ENCODE measurements at regions of chr16 and their contacts with region 1.

Region 1: GRCh38 chr16:68396481-68396880 is 51.8 kb downstream of the SMPD3 start:
- DNase-seq: peak; percentile 26 to 75 (median 53)
- H3K4me3 ChIP-seq: no peak overlapping the region
- H3K4me3 Mint-ChIP-seq: peak overlapping the region in 1 of 7 donors; percentile 36
- H3K27ac ChIP-seq: no peak overlapping the region
- H3K27ac Mint-ChIP-seq: peak overlapping the region in 5 of 8 donors; percentile 14 to 76 (median 38)
- H3K4me1 ChIP-seq: peaks cover 27% of the 10 kb centered on the region
- H3K4me1 Mint-ChIP-seq: peaks cover 12 to 25% (median 17%) of the 10 kb centered on the region in 3 donors
- H3K27me3 ChIP-seq: no peaks in the 10 kb centered on the region
- H3K27me3 Mint-ChIP-seq: peaks cover 0 to 2% of the 10 kb centered on the region in 2 donors

Region 2: DNA sequence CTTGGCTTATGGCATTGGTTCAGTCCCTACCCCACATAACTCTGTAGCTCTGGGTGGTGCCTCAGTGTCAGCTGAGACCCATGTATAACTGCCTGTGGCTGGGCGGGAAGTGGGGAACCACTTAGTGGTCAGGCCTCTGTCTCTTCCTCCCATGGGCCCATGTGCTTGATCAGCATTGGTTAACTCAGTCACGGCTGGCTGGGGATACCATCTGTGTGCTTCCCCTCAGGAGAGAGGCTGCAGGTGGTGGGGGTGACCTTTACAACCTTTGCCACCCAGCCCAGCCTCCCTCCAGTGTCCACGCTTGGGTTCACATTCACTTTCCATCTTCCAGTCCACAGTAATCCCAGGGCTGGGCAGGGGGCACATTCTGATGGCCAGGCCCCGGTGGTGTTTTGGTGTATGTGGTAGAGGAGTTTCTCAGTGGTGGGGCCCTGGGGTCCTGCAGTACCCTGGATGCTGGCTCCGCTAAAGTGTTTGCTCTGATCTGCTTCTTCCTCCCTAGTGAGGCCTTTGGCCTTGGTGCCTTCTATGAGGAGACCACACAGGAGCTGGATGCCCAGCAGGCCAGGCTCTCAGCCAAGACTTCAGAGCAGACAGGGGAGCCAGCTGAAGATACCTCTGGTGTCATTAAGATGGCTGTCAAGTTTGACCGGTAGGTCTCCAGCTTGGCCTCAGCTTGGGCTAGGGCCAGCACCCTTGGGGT is 321.5 kb before region 1 on chr16:
- CTCF ChIA-PET with region 1: no interaction called
- POLR2A ChIA-PET with region 1: no interaction called
- DNase-seq: peak; percentile 53 to 87 (median 69)
- H3K4me3 ChIP-seq: peak overlapping the region; percentile 40
- H3K4me3 Mint-ChIP-seq: peak overlapping the region; percentile 51 to 91 (median 82)
- H3K27ac ChIP-seq: no peak overlapping the region
- H3K27ac Mint-ChIP-seq: peak overlapping the region; percentile 81 to 99 (median 94)
- H3K4me1 ChIP-seq: peaks cover 85% of the 10 kb centered on the region
- H3K4me1 Mint-ChIP-seq: peaks cover 88 to 90% (median 90%) of the 10 kb centered on the region in 3 donors
- H3K27me3 ChIP-seq: no peaks in the 10 kb centered on the region
- H3K27me3 Mint-ChIP-seq: no peaks in the 10 kb centered on the region

Region 3: GRCh38 chr16:68406451-68407152 is 10.1 kb after region 1 on chr16:
- CTCF ChIA-PET with region 1: interaction called, 17 read pairs
- POLR2A ChIA-PET with region 1: no interaction called
- DNase-seq: no peak
- H3K4me3 ChIP-seq: no peak overlapping the region
- H3K4me3 Mint-ChIP-seq: no peak overlapping the region
- H3K27ac ChIP-seq: no peak overlapping the region
- H3K27ac Mint-ChIP-seq: no peak overlapping the region
- H3K4me1 ChIP-seq: peaks cover under 1% of the 10 kb centered on the region
- H3K4me1 Mint-ChIP-seq: peaks cover 6 to 13% (median 10%) of the 10 kb centered on the region in 3 donors
- H3K27me3 ChIP-seq: peaks cover 3% of the 10 kb centered on the region
- H3K27me3 Mint-ChIP-seq: peaks cover 4 to 7% of the 10 kb centered on the region in 2 donors

Region 4: GRCh38 chr16:68417711-68418301 is 21.3 kb after region 1 on chr16:
- CTCF ChIA-PET with region 1: interaction called, 24 read pairs
- POLR2A ChIA-PET with region 1: interaction called, 3 read pairs
- DNase-seq: peak; percentile 49 to 88 (median 79)
- H3K4me3 ChIP-seq: peak overlapping the region; percentile 21
- H3K4me3 Mint-ChIP-seq: peak overlapping the region; percentile 46 to 91 (median 86)
- H3K27ac ChIP-seq: peak overlapping the region; percentile 20
- H3K27ac Mint-ChIP-seq: peak overlapping the region; percentile 89 to 98 (median 95)
- H3K4me1 ChIP-seq: peaks cover 69% of the 10 kb centered on the region
- H3K4me1 Mint-ChIP-seq: peaks cover 47 to 67% (median 49%) of the 10 kb centered on the region in 3 donors
- H3K27me3 ChIP-seq: no peaks in the 10 kb centered on the region
- H3K27me3 Mint-ChIP-seq: peaks cover 0 to 2% of the 10 kb centered on the region in 2 donors

Region 5: GRCh38 chr16:68470461-68471150 is 74.1 kb after region 1 on chr16:
- CTCF ChIA-PET with region 1: interaction called, 15 read pairs
- POLR2A ChIA-PET with region 1: no interaction called
- DNase-seq: peak in 1 of 5 donors; percentile 27
- H3K4me3 ChIP-seq: peak overlapping the region; percentile 52
- H3K4me3 Mint-ChIP-seq: peak overlapping the region; percentile 24 to 94 (median 87)
- H3K27ac ChIP-seq: no peak overlapping the region
- H3K27ac Mint-ChIP-seq: peak overlapping the region; percentile 4 to 91 (median 88)
- H3K4me1 ChIP-seq: peaks cover 39% of the 10 kb centered on the region
- H3K4me1 Mint-ChIP-seq: peaks cover 40 to 53% (median 52%) of the 10 kb centered on the region in 3 donors
- H3K27me3 ChIP-seq: no peaks in the 10 kb centered on the region
- H3K27me3 Mint-ChIP-seq: no peaks in the 10 kb centered on the region

Region 6: GRCh38 chr16:68506331-68507053 is 110.0 kb after region 1 on chr16:
- CTCF ChIA-PET with region 1: interaction called, 91 read pairs
- POLR2A ChIA-PET with region 1: no interaction called
- DNase-seq: no peak
- H3K4me3 ChIP-seq: no peak overlapping the region
- H3K4me3 Mint-ChIP-seq: no peak overlapping the region
- H3K27ac ChIP-seq: no peak overlapping the region
- H3K27ac Mint-ChIP-seq: peak overlapping the region in 2 of 8 donors; percentile 70 to 83
- H3K4me1 ChIP-seq: peaks cover 4% of the 10 kb centered on the region
- H3K4me1 Mint-ChIP-seq: no peaks in the 10 kb centered on the region
- H3K27me3 ChIP-seq: no peaks in the 10 kb centered on the region
- H3K27me3 Mint-ChIP-seq: peaks cover 0 to 9% of the 10 kb centered on the region in 2 donors

Region 7: GRCh38 chr16:68520649-68521086 is 124.2 kb after region 1 on chr16:
- CTCF ChIA-PET with region 1: interaction called, 33 read pairs
- POLR2A ChIA-PET with region 1: no interaction called
- DNase-seq: peak; percentile 78 to 93 (median 81)
- H3K4me3 ChIP-seq: peak overlapping the region; percentile 25
- H3K4me3 Mint-ChIP-seq: peak overlapping the region; percentile 38 to 72 (median 56)
- H3K27ac ChIP-seq: no peak overlapping the region
- H3K27ac Mint-ChIP-seq: peak overlapping the region in 7 of 8 donors; percentile 47 to 95 (median 62)
- H3K4me1 ChIP-seq: peaks cover 3% of the 10 kb centered on the region
- H3K4me1 Mint-ChIP-seq: peaks cover 7 to 9% (median 8%) of the 10 kb centered on the region in 3 donors
- H3K27me3 ChIP-seq: no peaks in the 10 kb centered on the region
- H3K27me3 Mint-ChIP-seq: peaks cover 0 to 9% of the 10 kb centered on the region in 2 donors